CD8-positive, alpha-beta T cell (primary cell): ENCODE measurements at regions of chr10 and their contacts with region 1.

Region 1: GRCh38 chr10:7787857-7788638 is at the starts of genes ATP5F1C and KIN:
- DNase-seq: peak; percentile 95 to 99 (median 97)
- ATAC-seq: peak; percentile 96
- H3K4me3 ChIP-seq: peak within 1 kb of the TSS; percentile 78 to 96
- H3K4me3 Mint-ChIP-seq: no peak within 1 kb of the TSS
- H3K27ac ChIP-seq: peak within 1 kb of the TSS; percentile 73 to 77
- H3K27ac Mint-ChIP-seq: no peak within 1 kb of the TSS
- H3K4me1 ChIP-seq: peaks cover 46% of the 10 kb centered on the region
- H3K4me1 Mint-ChIP-seq: peaks cover 66% of the 10 kb centered on the region
- H3K27me3 ChIP-seq: no peaks in the 10 kb centered on the region
- H3K27me3 Mint-ChIP-seq: no peaks in the 10 kb centered on the region
- CTCF ChIP-seq: no peak
- total RNA-seq, gene ATP5F1C: 127 to 132 TPM
- total RNA-seq, gene KIN: 10.2 to 13.0 TPM

Region 2: GRCh38 chr10:7432884-7433726 is 354.9 kb before region 1 on chr10:
- CTCF ChIA-PET with region 1: no interaction called
- POLR2A ChIA-PET with region 1: no interaction called
- intact Hi-C with region 1: no loop called
- DNase-seq: no peak
- ATAC-seq: no peak
- H3K4me3 ChIP-seq: no peak overlapping the region
- H3K4me3 Mint-ChIP-seq: no peak overlapping the region
- H3K27ac ChIP-seq: no peak overlapping the region
- H3K27ac Mint-ChIP-seq: no peak overlapping the region
- H3K4me1 ChIP-seq: no peaks in the 10 kb centered on the region
- H3K4me1 Mint-ChIP-seq: peaks cover 11% of the 10 kb centered on the region
- H3K27me3 ChIP-seq: no peaks in the 10 kb centered on the region
- H3K27me3 Mint-ChIP-seq: no peaks in the 10 kb centered on the region
- CTCF ChIP-seq: no peak

Region 3: GRCh38 chr10:7818295-7819122 is 30.5 kb after region 1 on chr10 and contains the start of gene TAF3:
- CTCF ChIA-PET with region 1: interaction called, 4 read pairs
- POLR2A ChIA-PET with region 1: interaction called, 45 read pairs
- intact Hi-C with region 1: loop called (anchors 1 kb)
- DNase-seq: peak; percentile 88 to 95 (median 92)
- ATAC-seq: peak; percentile 92
- H3K4me3 ChIP-seq: peak within 1 kb of the TSS; percentile 93 to 99
- H3K4me3 Mint-ChIP-seq: peak within 1 kb of the TSS; percentile 98
- H3K27ac ChIP-seq: peak within 1 kb of the TSS; percentile 64 to 70
- H3K27ac Mint-ChIP-seq: peak within 1 kb of the TSS; percentile 91
- H3K4me1 ChIP-seq: peaks cover 25% of the 10 kb centered on the region
- H3K4me1 Mint-ChIP-seq: peaks cover 44% of the 10 kb centered on the region
- H3K27me3 ChIP-seq: no peaks in the 10 kb centered on the region
- H3K27me3 Mint-ChIP-seq: no peaks in the 10 kb centered on the region
- CTCF ChIP-seq: no peak
- total RNA-seq, gene TAF3: 12.1 to 12.4 TPM